B cell (primary cell): ENCODE measurements at regions of chr16 and their contacts with region 1.

Region 1: DNA sequence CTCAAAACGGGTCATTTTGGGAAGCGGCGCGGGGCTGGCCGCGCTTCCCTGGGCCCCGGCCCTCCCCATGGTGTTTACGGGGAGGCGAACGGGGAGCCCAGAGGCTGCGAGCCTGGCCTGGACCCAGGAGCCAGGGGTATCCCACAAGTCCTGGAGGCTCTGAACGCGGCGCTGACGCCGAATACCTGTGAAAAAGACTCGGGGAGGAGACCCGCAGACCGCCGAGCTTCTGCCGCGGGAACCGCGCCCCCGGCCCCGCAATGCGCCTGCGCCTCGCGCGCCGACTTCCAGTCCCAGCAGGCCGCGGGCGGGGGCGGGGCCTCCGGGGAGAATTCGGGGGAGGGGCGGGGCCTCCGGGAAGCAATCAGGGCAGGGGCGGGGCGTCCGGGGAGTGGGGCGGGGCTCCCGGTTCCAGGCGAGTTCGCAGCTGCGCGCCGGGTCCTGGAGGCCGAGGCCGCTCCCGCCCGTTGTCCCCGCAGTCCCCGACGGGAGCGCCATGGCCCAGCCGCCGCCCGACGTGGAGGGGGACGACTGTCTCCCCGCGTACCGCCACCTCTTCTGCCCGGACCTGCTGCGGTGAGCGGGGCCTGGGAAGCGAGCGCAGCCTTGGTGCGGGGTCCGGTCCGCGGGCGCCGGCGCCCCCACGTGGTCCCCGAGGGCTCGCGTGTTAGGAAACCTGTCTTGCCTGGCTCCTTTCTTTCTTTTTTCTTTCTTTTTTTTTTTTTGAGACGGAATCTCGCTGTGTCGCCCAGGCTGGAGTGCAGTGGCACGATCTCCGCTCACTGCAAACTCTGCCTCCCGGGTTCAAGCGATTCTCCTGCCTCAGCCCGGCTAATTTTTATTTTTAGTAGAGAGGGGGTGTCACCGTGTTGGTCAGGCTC is at the start of gene DECR2:
- DNase-seq: peak; percentile 94
- ATAC-seq: peak; percentile 82
- H3K4me3 ChIP-seq: peak within 1 kb of the TSS; percentile 57 to 94 (median 91)
- H3K4me3 Mint-ChIP-seq: peak within 1 kb of the TSS; percentile 99
- H3K27ac ChIP-seq: peak within 1 kb of the TSS; percentile 78 to 90
- H3K27ac Mint-ChIP-seq: peak within 1 kb of the TSS; percentile 100
- H3K4me1 ChIP-seq: peaks cover 13 to 20% of the 10 kb centered on the region in 2 donors
- H3K4me1 Mint-ChIP-seq: peaks cover 14% of the 10 kb centered on the region
- H3K27me3 ChIP-seq: no peaks in the 10 kb centered on the region
- H3K27me3 Mint-ChIP-seq: no peaks in the 10 kb centered on the region
- CTCF ChIP-seq: peak; percentile 76
- total RNA-seq, gene DECR2: 9.0 and 11.0 TPM in 2 replicates

Region 2: GRCh38 chr16:370443-370842 is 31.3 kb before region 1 on chr16 and contains the start of gene MRPL28:
- CTCF ChIA-PET with region 1: interaction called, 5 read pairs
- POLR2A ChIA-PET with region 1: interaction called, 6 read pairs
- intact Hi-C with region 1: loop called (anchors 1 kb)
- DNase-seq: peak; percentile 95
- ATAC-seq: peak; percentile 99
- H3K4me3 ChIP-seq: peak within 1 kb of the TSS in 3 of 5 experiments; percentile 31 to 47 (median 35)
- H3K4me3 Mint-ChIP-seq: peak within 1 kb of the TSS; percentile 85
- H3K27ac ChIP-seq: peak within 1 kb of the TSS; percentile 59 to 66
- H3K27ac Mint-ChIP-seq: peak within 1 kb of the TSS; percentile 72
- H3K4me1 ChIP-seq: peaks cover 6 to 18% of the 10 kb centered on the region in 2 donors
- H3K4me1 Mint-ChIP-seq: peaks cover 17% of the 10 kb centered on the region
- H3K27me3 ChIP-seq: no peaks in the 10 kb centered on the region
- H3K27me3 Mint-ChIP-seq: no peaks in the 10 kb centered on the region
- CTCF ChIP-seq: no peak
- total RNA-seq, gene MRPL28: 44.3 and 45.1 TPM in 2 replicates

Region 3: DNA sequence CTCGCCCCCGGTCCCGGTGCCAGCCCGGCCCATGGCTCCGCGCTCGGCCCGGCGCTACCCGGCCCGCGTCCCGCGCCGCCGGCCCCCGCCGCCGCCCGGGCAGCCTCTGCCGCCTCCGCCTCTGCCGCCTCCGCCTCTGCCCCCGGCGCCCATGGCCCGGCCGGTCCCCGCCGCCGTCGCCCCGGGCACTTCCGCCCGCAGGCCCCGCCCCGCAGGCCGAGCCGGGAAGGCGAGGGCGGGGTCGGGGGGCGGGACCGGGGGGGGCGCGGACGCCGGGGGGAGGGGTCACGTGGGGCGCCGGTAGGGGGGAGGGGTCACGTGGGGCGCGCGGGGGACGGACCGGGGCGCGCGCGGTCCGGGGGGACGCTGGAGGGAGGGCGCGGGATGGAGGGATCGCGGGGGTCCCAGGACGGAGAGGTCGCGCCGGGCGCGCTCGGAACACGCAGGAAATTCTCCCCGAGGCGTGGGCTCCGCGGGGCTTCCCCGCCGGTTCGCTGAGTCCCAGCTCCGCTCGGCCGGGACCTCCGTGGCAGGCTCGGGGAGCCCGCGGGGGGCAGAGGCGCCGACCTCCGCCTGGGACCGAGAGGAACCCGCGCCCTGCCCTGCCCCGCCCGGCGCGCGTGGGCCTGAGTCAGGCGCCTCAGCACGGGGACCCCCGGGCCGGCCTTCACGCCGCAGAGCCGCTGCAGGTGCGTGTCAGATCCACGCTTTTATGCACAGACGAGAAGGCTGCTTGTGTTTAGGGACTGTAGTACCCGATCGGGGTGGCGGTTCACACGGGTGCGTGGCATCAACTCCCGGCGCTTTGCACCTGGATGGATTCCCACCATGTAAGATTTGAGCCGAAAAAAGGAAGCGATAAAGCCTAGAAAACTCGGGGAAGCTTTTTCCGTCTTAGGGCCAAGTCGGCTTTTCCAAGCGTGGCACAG is 19.7 kb before region 1 on chr16 and contains the start of gene PGAP6:
- CTCF ChIA-PET with region 1: interaction called, 4 read pairs
- POLR2A ChIA-PET with region 1: interaction called, 24 read pairs
- intact Hi-C with region 1: loop called (anchors 1 kb)
- DNase-seq: peak; percentile 80
- ATAC-seq: peak; percentile 73
- H3K4me3 ChIP-seq: peak within 1 kb of the TSS; percentile 60 to 99 (median 72)
- H3K4me3 Mint-ChIP-seq: peak within 1 kb of the TSS; percentile 97
- H3K27ac ChIP-seq: peak within 1 kb of the TSS; percentile 55 to 84
- H3K27ac Mint-ChIP-seq: peak within 1 kb of the TSS; percentile 93
- H3K4me1 ChIP-seq: peaks cover 21 to 33% of the 10 kb centered on the region in 2 donors
- H3K4me1 Mint-ChIP-seq: peaks cover 22% of the 10 kb centered on the region
- H3K27me3 ChIP-seq: no peaks in the 10 kb centered on the region
- H3K27me3 Mint-ChIP-seq: no peaks in the 10 kb centered on the region
- CTCF ChIP-seq: no peak
- total RNA-seq, gene PGAP6: 47.4 and 50.8 TPM in 2 replicates

Region 4: DNA sequence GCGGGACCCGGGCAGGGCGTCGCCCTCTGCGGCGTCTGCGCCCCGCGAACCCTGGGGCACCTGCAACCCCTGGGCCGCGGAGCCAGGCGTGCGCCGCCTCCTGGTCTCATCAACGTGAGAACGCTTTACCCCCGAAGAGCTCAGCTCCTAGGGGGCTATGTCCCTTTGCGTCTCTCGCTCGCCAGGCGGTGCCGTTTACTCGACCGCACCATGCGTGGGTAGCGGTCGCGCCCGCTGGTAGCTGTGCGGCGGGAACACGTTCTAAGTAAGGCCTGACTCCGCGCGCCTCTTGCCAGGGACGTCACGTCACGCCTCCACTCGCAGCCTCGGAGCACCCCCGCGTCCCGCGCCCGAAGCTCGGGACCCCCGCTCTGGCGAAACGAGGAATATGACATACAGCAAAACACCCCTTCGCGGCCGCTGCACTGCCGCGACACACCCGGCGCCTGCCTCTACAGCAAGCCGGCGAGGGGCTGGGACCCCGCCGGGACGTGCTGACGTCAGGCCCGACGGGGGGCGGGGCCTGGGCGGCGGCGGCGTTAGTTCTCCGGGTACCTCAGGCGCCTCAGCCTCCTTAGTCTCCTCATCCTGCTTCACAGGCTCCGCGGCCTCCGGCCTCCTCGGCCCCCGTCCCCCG is 23.5 kb after region 1 on chr16 and contains the start of gene RAB11FIP3:
- CTCF ChIA-PET with region 1: interaction called, 4 read pairs
- POLR2A ChIA-PET with region 1: interaction called, 13 read pairs
- intact Hi-C with region 1: loop called (anchors 1 kb)
- DNase-seq: peak; percentile 92
- ATAC-seq: peak; percentile 91
- H3K4me3 ChIP-seq: peak within 1 kb of the TSS in 4 of 5 experiments; percentile 52 to 71 (median 71)
- H3K4me3 Mint-ChIP-seq: peak within 1 kb of the TSS; percentile 93
- H3K27ac ChIP-seq: peak within 1 kb of the TSS; percentile 51 to 92
- H3K27ac Mint-ChIP-seq: peak within 1 kb of the TSS; percentile 91
- H3K4me1 ChIP-seq: peaks cover 16 to 22% of the 10 kb centered on the region in 2 donors
- H3K4me1 Mint-ChIP-seq: peaks cover 25% of the 10 kb centered on the region
- H3K27me3 ChIP-seq: peaks cover 0 to 14% (median 2%) of the 10 kb centered on the region in 4 experiments
- H3K27me3 Mint-ChIP-seq: peaks cover 9% of the 10 kb centered on the region
- CTCF ChIP-seq: peak; percentile 49
- total RNA-seq, gene RAB11FIP3: 57.2 and 60.6 TPM in 2 replicates

Region 5: GRCh38 chr16:468068-468821 is 66.5 kb after region 1 on chr16:
- CTCF ChIA-PET with region 1: no interaction called
- POLR2A ChIA-PET with region 1: no interaction called
- intact Hi-C with region 1: no loop called
- DNase-seq: no peak
- ATAC-seq: no peak
- H3K4me3 ChIP-seq: no peak overlapping the region
- H3K4me3 Mint-ChIP-seq: no peak overlapping the region
- H3K27ac ChIP-seq: no peak overlapping the region
- H3K27ac Mint-ChIP-seq: no peak overlapping the region
- H3K4me1 ChIP-seq: no peaks in the 10 kb centered on the region
- H3K4me1 Mint-ChIP-seq: no peaks in the 10 kb centered on the region
- H3K27me3 ChIP-seq: no peaks in the 10 kb centered on the region
- H3K27me3 Mint-ChIP-seq: no peaks in the 10 kb centered on the region
- CTCF ChIP-seq: no peak

Region 6: DNA sequence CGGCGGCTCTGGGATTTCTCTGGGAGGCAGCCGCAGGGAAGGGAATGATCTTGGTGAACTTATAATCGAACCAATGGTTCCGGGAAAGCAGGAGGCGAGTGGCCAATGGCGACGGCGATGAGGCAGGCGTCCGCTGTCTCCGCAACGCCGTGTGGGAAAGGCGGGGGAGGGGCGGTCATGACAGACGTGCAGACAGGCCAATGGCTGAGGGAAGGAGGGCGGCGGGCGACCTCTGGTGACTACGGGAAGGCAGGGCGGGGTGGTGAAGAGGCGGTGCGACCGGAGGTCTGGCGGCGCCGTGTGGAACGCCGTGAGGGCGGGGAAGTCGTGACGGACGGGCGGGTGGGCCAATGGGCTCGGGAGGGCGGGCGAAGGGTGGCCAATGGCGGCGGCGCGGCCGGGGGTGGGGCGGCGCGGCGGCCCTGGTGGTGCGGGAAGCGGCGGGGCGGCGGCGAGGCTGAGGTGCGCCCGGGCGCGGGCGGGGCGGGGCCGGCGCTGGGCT is 188.0 kb after region 1 on chr16 and contains the start of gene RAB40C:
- CTCF ChIA-PET with region 1: no interaction called
- POLR2A ChIA-PET with region 1: no interaction called
- intact Hi-C with region 1: loop called (anchors 5 kb)
- DNase-seq: peak; percentile 100
- ATAC-seq: peak; percentile 84
- H3K4me3 ChIP-seq: peak within 1 kb of the TSS; percentile 66 to 89 (median 78)
- H3K4me3 Mint-ChIP-seq: peak within 1 kb of the TSS; percentile 94
- H3K27ac ChIP-seq: peak within 1 kb of the TSS; percentile 85 to 88
- H3K27ac Mint-ChIP-seq: peak within 1 kb of the TSS; percentile 99
- H3K4me1 ChIP-seq: peaks cover 14 to 30% of the 10 kb centered on the region in 2 donors
- H3K4me1 Mint-ChIP-seq: peaks cover 50% of the 10 kb centered on the region
- H3K27me3 ChIP-seq: peaks cover 0 to 2% (median 0%) of the 10 kb centered on the region in 4 experiments
- H3K27me3 Mint-ChIP-seq: no peaks in the 10 kb centered on the region
- CTCF ChIP-seq: no peak
- total RNA-seq, gene RAB40C: 25.5 and 26.9 TPM in 2 replicates